ENCODE measurements at regions of chr14 and their contacts with region 1.

Region 1: GRCh38 chr14:21852061-21852664 is 178.5 kb upstream of the OR4E1 start:
- DNase-seq: peak; percentile 58
- H3K4me3 ChIP-seq: no peak overlapping the region
- H3K27ac ChIP-seq: no peak overlapping the region
- H3K4me1 ChIP-seq: no peaks in the 10 kb centered on the region
- H3K27me3 ChIP-seq: peaks cover 20 to 37% of the 10 kb centered on the region in 2 experiments
- CTCF ChIP-seq: peak; percentile 76 to 86
- POLR2A ChIP-seq: no peak

Region 2: GRCh38 chr14:21825149-21825743 is 26.9 kb before region 1 on chr14:
- CTCF ChIA-PET with region 1: interaction called, 17 read pairs
- POLR2A ChIA-PET with region 1: no interaction called
- dilution Hi-C with region 1: no loop called
- intact Hi-C with region 1: no loop called
- DNase-seq: peak; percentile 37
- H3K4me3 ChIP-seq: no peak overlapping the region
- H3K27ac ChIP-seq: no peak overlapping the region
- H3K4me1 ChIP-seq: no peaks in the 10 kb centered on the region
- H3K27me3 ChIP-seq: peaks cover 8 to 27% of the 10 kb centered on the region in 2 experiments
- CTCF ChIP-seq: peak; percentile 57 to 58
- POLR2A ChIP-seq: no peak

Region 3: GRCh38 chr14:21868442-21869046 is 16.4 kb after region 1 on chr14:
- CTCF ChIA-PET with region 1: interaction called, 31 read pairs
- POLR2A ChIA-PET with region 1: no interaction called
- dilution Hi-C with region 1: no loop called
- intact Hi-C with region 1: no loop called
- DNase-seq: peak; percentile 90
- H3K4me3 ChIP-seq: no peak overlapping the region
- H3K27ac ChIP-seq: peak overlapping the region; percentile 88
- H3K4me1 ChIP-seq: peaks cover 29% of the 10 kb centered on the region
- H3K27me3 ChIP-seq: no peaks in the 10 kb centered on the region
- CTCF ChIP-seq: peak; percentile 80 to 83
- POLR2A ChIP-seq: no peak

Region 4: GRCh38 chr14:21987937-21988336 is 135.8 kb after region 1 on chr14:
- CTCF ChIA-PET with region 1: interaction called, 12 read pairs
- POLR2A ChIA-PET with region 1: no interaction called
- dilution Hi-C with region 1: no loop called
- intact Hi-C with region 1: no loop called
- DNase-seq: peak; percentile 39
- H3K4me3 ChIP-seq: no peak overlapping the region
- H3K27ac ChIP-seq: no peak overlapping the region
- H3K4me1 ChIP-seq: no peaks in the 10 kb centered on the region
- H3K27me3 ChIP-seq: peaks cover 5 to 14% of the 10 kb centered on the region in 2 experiments
- CTCF ChIP-seq: peak; percentile 60 to 69
- POLR2A ChIP-seq: no peak

Region 5: GRCh38 chr14:22099942-22100763 is 248.0 kb after region 1 on chr14:
- CTCF ChIA-PET with region 1: interaction called, 10 read pairs
- POLR2A ChIA-PET with region 1: no interaction called
- dilution Hi-C with region 1: no loop called
- intact Hi-C with region 1: no loop called
- DNase-seq: peak; percentile 85
- H3K4me3 ChIP-seq: no peak overlapping the region
- H3K27ac ChIP-seq: no peak overlapping the region
- H3K4me1 ChIP-seq: peaks cover 9% of the 10 kb centered on the region
- H3K27me3 ChIP-seq: no peaks in the 10 kb centered on the region
- CTCF ChIP-seq: peak; percentile 77 to 80
- POLR2A ChIP-seq: no peak

Region 6: DNA sequence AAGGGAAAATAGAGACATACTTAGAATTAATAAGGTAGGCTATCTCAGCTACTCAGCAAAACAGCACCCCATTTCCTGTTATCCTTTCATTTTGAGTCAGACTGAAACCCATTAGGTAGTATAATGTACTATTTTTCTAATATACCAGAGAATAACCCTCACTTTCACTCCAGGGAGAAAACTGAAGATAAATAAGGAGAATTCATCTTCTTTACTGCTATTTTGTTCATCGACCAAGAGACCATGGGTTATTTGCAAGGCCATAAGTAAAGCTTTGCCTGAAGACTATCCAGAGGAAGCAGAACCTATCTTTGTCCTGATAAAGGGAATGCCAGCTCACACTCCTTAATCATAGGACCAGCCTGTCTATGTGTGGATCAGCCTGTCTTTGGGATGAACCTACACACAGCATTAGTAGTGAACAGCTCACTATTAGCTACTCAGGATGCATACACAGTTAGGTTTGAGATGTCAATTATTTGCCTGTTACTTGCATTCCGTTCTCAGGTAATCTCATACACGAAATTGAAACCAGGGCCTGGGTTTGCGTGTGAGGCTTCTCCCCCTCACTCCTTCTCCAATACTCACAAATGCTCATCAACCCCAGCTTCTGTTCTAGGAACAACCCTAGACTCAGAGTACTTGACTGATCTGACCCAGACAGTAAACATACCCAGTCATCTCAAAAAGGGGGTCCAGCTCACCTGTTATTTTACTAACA is 612.4 kb after region 1 on chr14:
- CTCF ChIA-PET with region 1: no interaction called
- POLR2A ChIA-PET with region 1: no interaction called
- dilution Hi-C with region 1: no loop called
- intact Hi-C with region 1: no loop called
- DNase-seq: no peak
- H3K4me3 ChIP-seq: no peak overlapping the region
- H3K27ac ChIP-seq: no peak overlapping the region
- H3K4me1 ChIP-seq: no peaks in the 10 kb centered on the region
- H3K27me3 ChIP-seq: peaks cover 13 to 17% of the 10 kb centered on the region in 2 experiments
- CTCF ChIP-seq: no peak
- POLR2A ChIP-seq: no peak